Heart left ventricle (tissue), 16 donors: ENCODE measurements at regions of chr9 and their contacts with region 1.

Region 1: GRCh38 chr9:36862206-36863145 is 171.6 kb downstream of the PAX5 start:
- DNase-seq: no peak
- ATAC-seq: peak in 3 of 4 donors; percentile 43 to 52 (median 47)
- H3K4me3 ChIP-seq: no peak overlapping the region
- H3K27ac ChIP-seq: no peak overlapping the region
- H3K4me1 ChIP-seq: no peaks in the 10 kb centered on the region
- H3K27me3 ChIP-seq: peaks cover 0 to 64% (median 8%) of the 10 kb centered on the region in 9 donors
- CTCF ChIP-seq: peak; percentile 38 to 66 (median 49)
- POLR2A ChIP-seq: no peak

Region 2: GRCh38 chr9:36802191-36802920 is 60.1 kb before region 1 on chr9:
- intact Hi-C with region 1: loop called in 1 of 10 experiments (anchors 10 kb)
- DNase-seq: no peak
- ATAC-seq: no peak
- H3K4me3 ChIP-seq: no peak overlapping the region
- H3K27ac ChIP-seq: no peak overlapping the region
- H3K4me1 ChIP-seq: no peaks in the 10 kb centered on the region
- H3K27me3 ChIP-seq: peaks cover 0 to 46% (median 0%) of the 10 kb centered on the region in 9 donors
- CTCF ChIP-seq: no peak
- POLR2A ChIP-seq: no peak

Region 3: GRCh38 chr9:37333288-37333687 is 470.8 kb after region 1 on chr9:
- intact Hi-C with region 1: loop called in 1 of 10 experiments (anchors 10 kb)
- DNase-seq: no peak
- ATAC-seq: no peak
- H3K4me3 ChIP-seq: no peak overlapping the region
- H3K27ac ChIP-seq: no peak overlapping the region
- H3K4me1 ChIP-seq: peaks cover 0 to 5% (median 0%) of the 10 kb centered on the region in 12 donors
- H3K27me3 ChIP-seq: no peaks in the 10 kb centered on the region
- CTCF ChIP-seq: no peak
- POLR2A ChIP-seq: no peak

Region 4: DNA sequence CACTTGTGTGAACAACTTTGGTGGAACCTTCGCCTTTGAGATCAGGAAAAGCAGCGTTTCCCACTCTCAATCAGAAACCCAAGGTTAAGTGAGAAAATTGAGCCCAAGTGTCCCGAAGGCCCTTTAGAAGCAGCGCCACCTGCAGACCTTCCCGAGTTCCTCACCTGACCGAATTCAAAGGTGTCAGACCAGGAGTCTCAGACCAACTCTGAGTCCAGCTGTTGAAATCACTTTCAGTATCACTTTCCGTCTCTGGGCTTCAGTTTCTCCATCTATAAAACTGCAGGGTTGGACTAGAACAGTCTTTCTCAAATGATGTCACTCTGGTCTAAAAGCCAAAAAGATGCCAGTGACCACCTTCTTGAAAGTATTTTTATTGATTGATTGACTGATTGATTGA is 528.3 kb after region 1 on chr9:
- intact Hi-C with region 1: loop called in 1 of 10 experiments (anchors 10 kb)
- DNase-seq: no peak
- ATAC-seq: no peak
- H3K4me3 ChIP-seq: no peak overlapping the region
- H3K27ac ChIP-seq: no peak overlapping the region
- H3K4me1 ChIP-seq: no peaks in the 10 kb centered on the region
- H3K27me3 ChIP-seq: no peaks in the 10 kb centered on the region
- CTCF ChIP-seq: peak in 6 of 12 donors; percentile 8 to 27 (median 14)
- POLR2A ChIP-seq: no peak